ENCODE measurements at regions of chr16 and their contacts with region 1.

Region 1: GRCh38 chr16:53549970-53550690 is 47.1 kb upstream of the AKTIP start:
- DNase-seq: peak; percentile 65
- ATAC-seq: peak; percentile 87
- H3K4me3 Mint-ChIP-seq: no peak overlapping the region
- H3K27ac Mint-ChIP-seq: no peak overlapping the region
- H3K4me1 Mint-ChIP-seq: peaks cover 34% of the 10 kb centered on the region
- H3K27me3 Mint-ChIP-seq: peaks cover 10% of the 10 kb centered on the region

Region 2: DNA sequence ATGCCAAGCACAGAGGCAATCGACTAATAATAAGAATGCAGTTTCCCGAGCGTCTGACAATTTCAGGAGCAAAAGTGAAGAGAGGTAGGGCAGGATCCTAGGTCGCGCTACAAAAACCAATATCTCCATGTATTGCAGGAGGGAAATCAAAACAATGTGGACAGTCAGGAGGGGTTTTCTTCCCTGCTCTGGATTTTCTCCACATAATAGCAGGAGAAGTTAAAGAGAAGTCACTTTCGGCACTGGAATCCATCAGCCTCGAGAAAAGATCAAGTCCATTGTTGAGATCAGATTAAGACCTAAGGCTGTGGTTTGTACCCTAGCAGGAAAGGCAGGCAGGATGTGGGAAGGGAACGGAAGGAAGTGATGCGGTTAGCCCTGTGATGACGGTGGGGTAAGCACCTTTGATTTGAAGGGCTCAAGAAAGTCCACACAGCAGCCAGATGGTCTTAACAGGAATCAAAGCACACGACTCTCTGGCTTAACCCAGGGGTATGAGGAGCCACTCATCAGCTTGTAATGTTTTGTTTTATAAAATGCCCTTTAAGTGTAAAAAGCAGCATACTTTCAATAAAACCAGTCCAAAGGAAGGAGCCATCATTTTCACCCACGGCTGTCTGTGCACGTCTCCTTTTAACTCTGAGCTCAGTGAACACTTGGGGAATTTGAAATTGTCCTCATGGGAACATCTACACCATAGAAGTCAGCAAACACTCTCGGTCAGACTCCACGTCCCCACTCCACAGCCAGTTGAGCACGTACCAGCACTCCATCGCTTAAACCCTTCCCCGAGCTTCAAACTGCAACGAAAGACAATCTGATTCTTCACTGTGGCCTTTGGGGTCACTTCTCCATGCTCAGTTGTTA is 31.3 kb before region 1 on chr16:
- CTCF ChIA-PET with region 1: interaction called, 10 read pairs
- DNase-seq: peak; percentile 95
- ATAC-seq: peak; percentile 89
- H3K4me3 Mint-ChIP-seq: peak overlapping the region; percentile 70
- H3K27ac Mint-ChIP-seq: peak overlapping the region; percentile 89
- H3K4me1 Mint-ChIP-seq: peaks cover 49% of the 10 kb centered on the region
- H3K27me3 Mint-ChIP-seq: no peaks in the 10 kb centered on the region

Region 3: DNA sequence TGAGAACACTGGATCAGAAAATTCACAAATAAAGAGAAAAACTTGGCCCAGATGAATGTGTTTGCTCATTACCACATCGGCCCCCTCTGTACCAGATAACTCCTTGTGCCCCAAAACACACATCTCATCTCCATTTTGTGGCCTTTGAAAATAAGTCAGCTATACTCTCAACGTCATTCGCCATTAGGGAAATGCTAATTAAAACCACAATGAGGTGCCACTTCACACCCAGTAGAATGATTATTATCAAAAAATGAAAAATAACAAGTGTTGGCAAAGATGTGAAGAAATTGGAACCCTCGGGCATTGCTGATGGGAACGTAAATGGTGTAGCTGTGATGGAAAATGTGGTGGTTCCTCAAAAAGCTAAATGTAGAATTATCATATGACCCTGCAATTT is 12.5 kb before region 1 on chr16:
- CTCF ChIA-PET with region 1: interaction called, 18 read pairs
- DNase-seq: no peak
- ATAC-seq: no peak
- H3K4me3 Mint-ChIP-seq: no peak overlapping the region
- H3K27ac Mint-ChIP-seq: no peak overlapping the region
- H3K4me1 Mint-ChIP-seq: peaks cover 27% of the 10 kb centered on the region
- H3K27me3 Mint-ChIP-seq: no peaks in the 10 kb centered on the region

Region 4: DNA sequence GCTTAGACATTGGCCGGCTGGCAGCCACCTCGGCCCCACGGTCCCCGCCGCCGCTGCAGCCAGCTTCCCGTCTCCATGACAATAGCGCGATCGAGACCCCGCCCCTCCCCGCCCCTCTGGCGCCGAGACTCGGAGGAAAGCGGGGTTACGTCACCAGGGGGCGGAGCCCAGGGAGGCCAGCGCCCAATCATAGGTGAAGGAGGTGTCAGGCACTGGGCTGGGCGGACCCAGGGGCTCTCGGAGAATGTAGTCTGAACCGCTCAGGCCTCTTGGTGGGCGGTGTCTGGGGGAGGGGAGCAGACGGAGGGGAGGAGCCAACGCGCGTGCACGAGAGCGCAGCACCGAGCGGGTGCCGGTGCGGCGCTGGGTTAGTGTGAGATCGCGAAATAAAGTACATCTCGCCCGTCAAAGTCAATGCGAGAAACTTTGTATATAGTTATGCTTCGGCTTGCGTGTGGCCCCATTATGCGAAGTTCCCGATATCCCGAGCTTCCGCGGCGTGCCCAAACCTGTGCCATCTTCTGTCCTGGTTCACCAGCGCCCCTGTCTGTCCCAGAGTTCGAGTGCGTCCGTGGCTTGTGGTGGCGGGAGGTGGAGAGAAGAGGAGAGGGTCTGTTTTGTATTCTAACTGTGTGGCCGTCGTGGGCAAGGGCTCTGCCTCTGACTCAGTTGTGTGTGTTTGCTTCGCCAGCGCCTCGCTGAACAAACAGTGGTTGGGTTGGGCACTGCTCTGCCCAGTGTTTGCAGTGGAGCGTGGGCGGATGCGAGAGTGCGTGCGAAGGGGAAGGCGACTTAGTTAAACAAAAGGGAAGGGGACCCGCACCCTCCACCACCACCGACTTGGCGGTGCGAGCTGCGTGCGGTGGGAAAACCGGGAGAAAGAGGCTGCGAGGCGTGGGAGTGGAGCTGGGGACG is 1379.2 kb after region 1 on chr16:
- CTCF ChIA-PET with region 1: interaction called, 11 read pairs
- DNase-seq: peak; percentile 96
- ATAC-seq: peak; percentile 94
- H3K4me3 Mint-ChIP-seq: peak overlapping the region; percentile 71
- H3K27ac Mint-ChIP-seq: peak overlapping the region; percentile 77
- H3K4me1 Mint-ChIP-seq: peaks cover 19% of the 10 kb centered on the region
- H3K27me3 Mint-ChIP-seq: peaks cover 67% of the 10 kb centered on the region